ENCODE measurements at regions of chr17 and their contacts with region 1.

Region 1: GRCh38 chr17:50681263-50682210 is 26.2 kb downstream of the ANKRD40 start:
- DNase-seq: peak; percentile 73 to 79 (median 76)
- ATAC-seq: peak; percentile 86
- H3K4me3 ChIP-seq: no peak overlapping the region
- H3K27ac ChIP-seq: no peak overlapping the region
- H3K4me1 ChIP-seq: peaks cover 4 to 11% of the 10 kb centered on the region in 2 experiments; a peak in 3 of 5 replicates
- H3K27me3 ChIP-seq: peaks cover 5 to 31% of the 10 kb centered on the region in 2 experiments; a peak in 4 of 5 replicates
- CTCF ChIP-seq: peak; percentile 86 to 98 (median 97)
- EP300 ChIP-seq: no peak
- POLR2A ChIP-seq: no peak
- RAD21 ChIP-seq: peak; percentile 90 to 96

Region 2: DNA sequence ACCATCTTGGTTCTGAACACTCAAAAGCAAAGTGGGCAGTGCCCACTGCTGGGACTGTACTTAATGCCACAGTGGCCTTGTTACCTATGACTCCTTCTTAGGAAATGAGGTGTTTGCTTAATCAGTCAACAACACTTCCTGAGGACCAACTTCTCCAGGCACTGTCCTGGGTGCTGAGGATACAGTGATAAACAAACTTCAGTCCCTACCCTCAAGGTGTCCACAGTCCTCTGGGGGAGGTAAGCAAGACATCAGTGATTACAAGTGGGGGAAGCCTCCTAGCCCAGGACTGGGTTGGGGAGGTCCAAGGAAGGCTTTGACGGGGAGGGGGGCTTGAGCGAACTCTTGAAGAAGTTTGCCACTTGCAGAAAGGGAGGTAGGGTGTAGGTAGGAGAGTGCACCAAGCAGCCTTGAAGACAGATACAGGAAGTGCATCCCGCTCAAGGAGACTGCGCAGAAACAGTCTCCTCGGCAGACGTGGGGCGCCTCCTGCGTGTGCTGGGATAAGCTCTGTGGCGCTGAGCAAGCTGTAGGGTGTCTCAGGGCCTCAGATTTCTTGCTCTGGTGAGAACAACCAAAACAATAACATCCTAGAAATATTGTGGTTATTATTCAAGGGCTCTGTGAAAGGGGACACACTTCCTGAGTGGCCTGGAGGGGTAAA is 49.5 kb before region 1 on chr17:
- CTCF ChIA-PET with region 1: interaction called, 9 read pairs
- POLR2A ChIA-PET with region 1: no interaction called
- in situ Hi-C with region 1: no loop called
- intact Hi-C with region 1: loop called (anchors 1 kb)
- DNase-seq: peak in 1 of 4 experiments; percentile 23
- ATAC-seq: peak; percentile 79
- H3K4me3 ChIP-seq: no peak overlapping the region
- H3K27ac ChIP-seq: no peak overlapping the region
- H3K4me1 ChIP-seq: peaks cover 0 to 29% of the 10 kb centered on the region in 2 experiments; a peak in 4 of 5 replicates
- H3K27me3 ChIP-seq: peaks cover 27 to 77% of the 10 kb centered on the region in 2 experiments
- CTCF ChIP-seq: no peak
- EP300 ChIP-seq: no peak
- POLR2A ChIP-seq: no peak
- RAD21 ChIP-seq: no peak

Region 3: GRCh38 chr17:50816771-50817751 is 135.5 kb after region 1 on chr17:
- CTCF ChIA-PET with region 1: no interaction called
- POLR2A ChIA-PET with region 1: no interaction called
- in situ Hi-C with region 1: no loop called
- intact Hi-C with region 1: no loop called
- DNase-seq: peak; percentile 71 to 84 (median 80)
- ATAC-seq: peak; percentile 92
- H3K4me3 ChIP-seq: peak overlapping the region; percentile 20; the same call in 1 of the 2 replicates
- H3K27ac ChIP-seq: no peak overlapping the region
- H3K4me1 ChIP-seq: peaks cover 3 to 6% of the 10 kb centered on the region in 2 experiments; a peak in 3 of 5 replicates
- H3K27me3 ChIP-seq: no peaks in the 10 kb centered on the region; a peak in 1 of 5 replicates
- CTCF ChIP-seq: peak; percentile 72 to 94 (median 73)
- EP300 ChIP-seq: no peak
- POLR2A ChIP-seq: no peak
- RAD21 ChIP-seq: peak; percentile 34 to 69; a peak in 3 of 4 replicates

Region 4: GRCh38 chr17:50834429-50835300 is 153.1 kb after region 1 on chr17:
- CTCF ChIA-PET with region 1: no interaction called
- POLR2A ChIA-PET with region 1: no interaction called
- in situ Hi-C with region 1: no loop called
- intact Hi-C with region 1: no loop called
- DNase-seq: no peak
- ATAC-seq: no peak; the same call in 2 of the 3 replicates
- H3K4me3 ChIP-seq: no peak overlapping the region
- H3K27ac ChIP-seq: no peak overlapping the region
- H3K4me1 ChIP-seq: peaks cover 18 to 54% of the 10 kb centered on the region in 2 experiments
- H3K27me3 ChIP-seq: peaks cover 0 to 20% of the 10 kb centered on the region in 2 experiments; a peak in 3 of 5 replicates
- CTCF ChIP-seq: no peak
- EP300 ChIP-seq: no peak
- POLR2A ChIP-seq: no peak
- RAD21 ChIP-seq: no peak